Heart right ventricle (tissue), 16 donors: ENCODE measurements at regions of chr7 and their contacts with region 1.

Region 1: DNA sequence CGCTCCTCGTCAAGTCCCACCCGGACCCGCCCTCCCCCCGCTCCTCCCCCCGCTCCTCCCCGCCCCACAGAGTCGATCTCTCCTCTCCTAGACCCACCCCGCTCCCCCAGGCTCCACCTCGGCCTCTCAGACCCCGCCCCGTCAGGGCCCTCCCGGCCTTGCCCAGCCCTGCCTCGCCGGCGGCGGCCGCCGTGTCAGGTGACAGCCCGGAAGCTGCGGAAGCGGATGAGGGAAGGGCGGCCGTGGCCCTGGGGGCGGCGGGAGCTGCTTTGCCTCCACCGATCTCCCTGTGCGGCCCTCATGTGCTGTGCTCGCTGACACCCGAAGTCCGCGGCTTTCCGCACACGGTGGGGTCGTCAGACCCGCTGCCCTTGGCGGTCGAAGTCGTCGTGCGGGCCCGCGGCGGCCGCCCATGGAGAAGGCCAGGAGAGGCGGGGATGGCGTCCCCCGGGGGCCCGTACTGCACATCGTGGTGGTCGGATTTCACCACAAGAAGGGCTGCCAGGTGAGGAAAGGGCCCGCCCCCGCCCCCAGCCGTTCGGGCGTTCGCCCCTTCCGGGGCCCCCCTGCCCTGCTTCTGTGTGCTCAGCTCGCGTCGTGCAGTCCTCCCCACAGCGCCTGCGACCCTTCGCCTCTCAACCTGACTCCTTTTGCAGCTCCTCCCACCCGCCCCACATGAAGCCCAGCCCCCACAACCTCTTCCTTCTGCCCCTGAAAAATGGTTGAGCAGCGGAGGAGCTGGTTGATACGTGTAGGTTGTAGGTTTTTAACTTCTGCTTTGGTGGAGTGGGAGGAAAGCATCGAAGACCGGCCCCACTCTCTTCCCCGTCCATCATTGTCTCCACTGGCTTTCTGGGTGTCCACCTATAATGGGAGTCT is at the start of gene AVL9:
- DNase-seq: peak; percentile 98 to 99
- ATAC-seq: peak; percentile 98 to 100 (median 99)
- H3K4me3 ChIP-seq: peak within 1 kb of the TSS; percentile 74 to 100 (median 94)
- H3K27ac ChIP-seq: peak within 1 kb of the TSS; percentile 84 to 100 (median 98)
- H3K4me1 ChIP-seq: peaks cover 0 to 39% (median 24%) of the 10 kb centered on the region in 9 donors
- H3K27me3 ChIP-seq: no peaks in the 10 kb centered on the region
- CTCF ChIP-seq: no peak
- total RNA-seq, gene AVL9: 11.1 to 21.7 (median 15.3) TPM

Region 2: DNA sequence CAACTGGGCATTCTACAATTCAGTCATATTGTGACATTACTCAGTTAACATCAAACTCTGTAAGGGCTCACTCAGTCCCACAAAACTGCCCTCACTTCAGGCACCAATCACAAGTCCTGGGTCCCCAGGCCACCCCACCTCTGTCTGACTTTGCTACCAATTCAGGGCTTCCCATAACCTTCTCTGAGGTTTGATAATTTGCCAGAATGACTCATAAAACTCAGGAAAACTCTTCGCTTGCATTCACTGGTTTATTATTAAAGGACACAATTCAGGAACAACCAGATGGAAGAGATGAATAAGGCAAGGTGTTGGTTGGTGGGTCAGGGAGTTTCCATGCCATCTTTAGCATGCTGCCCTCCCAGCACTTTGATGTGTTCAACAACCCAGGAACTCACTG is 41.0 kb after region 1 on chr7:
- intact Hi-C with region 1: loop called in 2 of 10 experiments (anchors 5 kb)
- DNase-seq: no peak
- ATAC-seq: peak in 3 of 8 donors; percentile 19 to 64 (median 39)
- H3K4me3 ChIP-seq: no peak overlapping the region
- H3K27ac ChIP-seq: no peak overlapping the region
- H3K4me1 ChIP-seq: peaks cover 0 to 29% (median 16%) of the 10 kb centered on the region in 9 donors
- H3K27me3 ChIP-seq: no peaks in the 10 kb centered on the region
- CTCF ChIP-seq: no peak

Region 3: GRCh38 chr7:32588657-32589056 is 93.1 kb after region 1 on chr7:
- intact Hi-C with region 1: loop called in 6 of 10 experiments (anchors 5 to 10 kb)
- DNase-seq: no peak
- ATAC-seq: peak in 6 of 8 donors; percentile 30 to 58 (median 36)
- H3K4me3 ChIP-seq: no peak overlapping the region
- H3K27ac ChIP-seq: peak overlapping the region in 8 of 10 donors; percentile 65 to 93 (median 86)
- H3K4me1 ChIP-seq: peaks cover 3 to 50% (median 40%) of the 10 kb centered on the region in 9 donors
- H3K27me3 ChIP-seq: no peaks in the 10 kb centered on the region
- CTCF ChIP-seq: no peak

Region 4: DNA sequence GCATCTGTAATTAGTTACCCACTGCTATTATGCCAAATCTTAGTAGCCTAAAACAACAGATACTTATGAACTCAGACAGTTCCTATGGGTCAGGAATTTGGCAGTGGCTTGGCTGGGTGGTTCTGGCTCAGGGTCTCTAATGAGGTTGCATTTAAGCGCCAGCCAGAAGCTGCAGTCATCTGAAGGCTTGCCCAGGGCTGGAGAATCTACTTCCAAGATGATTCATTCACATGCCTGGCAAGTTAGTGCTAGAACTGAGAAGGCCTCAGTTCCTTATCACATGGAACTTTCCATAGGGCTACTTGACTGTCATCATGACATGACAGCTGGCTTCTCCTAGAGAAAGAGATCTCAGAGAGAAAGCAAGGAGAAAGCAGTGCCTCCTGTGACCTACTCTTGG is 121.1 kb after region 1 on chr7:
- intact Hi-C with region 1: loop called in 1 of 10 experiments (anchors 10 kb)
- DNase-seq: peak; percentile 19 to 34
- ATAC-seq: peak; percentile 49 to 97 (median 60)
- H3K4me3 ChIP-seq: no peak overlapping the region
- H3K27ac ChIP-seq: peak overlapping the region in 2 of 10 donors; percentile 4 to 18
- H3K4me1 ChIP-seq: peaks cover 0 to 24% (median 9%) of the 10 kb centered on the region in 9 donors
- H3K27me3 ChIP-seq: no peaks in the 10 kb centered on the region
- CTCF ChIP-seq: no peak

Region 5: DNA sequence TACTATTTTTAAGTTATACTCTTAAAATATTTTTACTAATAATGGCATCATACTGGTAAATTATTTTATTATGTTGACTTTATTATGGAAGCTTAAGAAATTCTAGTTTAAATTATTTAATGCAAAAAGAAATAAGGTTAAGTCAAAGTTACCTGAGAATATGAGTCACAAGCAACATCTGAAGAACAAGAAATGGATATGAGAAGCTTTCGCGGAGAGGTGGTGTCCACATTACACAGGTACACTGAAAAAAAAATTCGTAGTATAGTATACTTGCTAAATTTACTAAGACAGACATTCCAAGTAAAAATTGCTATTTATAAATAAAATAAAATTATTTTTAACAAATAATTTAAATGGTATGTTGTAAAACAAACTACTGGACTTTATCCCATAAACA is 143.6 kb after region 1 on chr7:
- intact Hi-C with region 1: loop called in 1 of 10 experiments (anchors 10 kb)
- DNase-seq: no peak
- ATAC-seq: no peak
- H3K4me3 ChIP-seq: no peak overlapping the region
- H3K27ac ChIP-seq: no peak overlapping the region
- H3K4me1 ChIP-seq: peaks cover 0 to 4% (median 0%) of the 10 kb centered on the region in 9 donors
- H3K27me3 ChIP-seq: no peaks in the 10 kb centered on the region
- CTCF ChIP-seq: no peak

Region 6: DNA sequence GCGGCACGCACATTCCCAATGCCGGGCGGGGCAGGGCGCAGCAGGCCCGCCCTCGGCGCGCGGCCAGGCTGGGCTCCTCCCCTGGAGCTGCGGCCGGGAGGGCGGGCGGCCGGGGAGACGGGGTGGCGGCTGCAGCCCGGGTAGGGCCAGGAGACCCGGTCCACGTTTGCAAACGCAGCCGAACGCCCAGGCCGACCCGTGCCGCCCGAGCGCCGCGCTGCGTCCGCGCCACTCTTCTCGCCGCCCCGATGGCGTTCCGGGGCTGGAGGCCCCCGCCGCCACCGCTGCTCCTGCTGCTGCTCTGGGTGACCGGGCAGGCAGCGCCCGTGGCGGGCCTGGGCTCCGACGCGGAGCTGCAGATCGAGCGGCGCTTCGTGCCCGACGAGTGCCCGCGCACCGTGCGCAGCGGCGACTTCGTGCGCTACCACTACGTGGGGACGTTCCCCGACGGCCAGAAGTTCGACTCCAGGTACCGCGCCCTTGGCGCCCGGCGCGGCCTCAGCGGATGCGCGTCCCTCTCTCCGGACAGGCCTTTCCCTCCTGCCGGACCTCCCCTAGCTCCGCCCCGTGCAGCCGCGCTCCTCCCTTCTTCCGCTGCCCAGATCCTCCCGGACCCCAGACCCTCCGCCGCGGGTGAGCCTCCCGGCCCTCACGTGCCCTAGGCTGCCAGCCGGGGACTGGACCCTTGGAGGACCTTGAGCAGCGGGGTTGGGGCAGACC is 461.9 kb after region 1 on chr7 and contains the start of gene FKBP9:
- intact Hi-C with region 1: loop called in 1 of 10 experiments (anchors 10 kb)
- DNase-seq: peak; percentile 84 to 95
- ATAC-seq: peak; percentile 94 to 97 (median 96)
- H3K4me3 ChIP-seq: peak within 1 kb of the TSS; percentile 75 to 99 (median 92)
- H3K27ac ChIP-seq: peak within 1 kb of the TSS; percentile 93 to 100 (median 98)
- H3K4me1 ChIP-seq: peaks cover 3 to 31% (median 19%) of the 10 kb centered on the region in 9 donors
- H3K27me3 ChIP-seq: peaks cover 0 to 3% (median 0%) of the 10 kb centered on the region in 7 donors
- CTCF ChIP-seq: no peak
- total RNA-seq, gene FKBP9: 103 to 158 (median 122) TPM

Region 7: GRCh38 chr7:33050535-33051318 is 555.2 kb after region 1 on chr7:
- intact Hi-C with region 1: loop called in 1 of 10 experiments (anchors 10 kb)
- DNase-seq: no peak
- ATAC-seq: peak in 6 of 8 donors; percentile 52 to 70 (median 62)
- H3K4me3 ChIP-seq: peak overlapping the region in 3 of 10 donors; percentile 9 to 28 (median 26)
- H3K27ac ChIP-seq: peak overlapping the region in 6 of 10 donors; percentile 14 to 77 (median 56)
- H3K4me1 ChIP-seq: peaks cover 0 to 59% (median 24%) of the 10 kb centered on the region in 9 donors
- H3K27me3 ChIP-seq: no peaks in the 10 kb centered on the region
- CTCF ChIP-seq: peak; percentile 24 to 80 (median 72)